Activated CD4-positive, alpha-beta T cell treated with anti-CD3 and anti-CD28 coated beads, Interleukin-2, amount 10 ng/mL, durations not matched to agents 7 days and 5 days (primary cell): ENCODE measurements at regions of chr15 and their contacts with region 1.

Region 1: GRCh38 chr15:63986751-63987341 is 59.4 kb downstream of the DAPK2 start:
- DNase-seq: no peak
- H3K4me3 Mint-ChIP-seq: no peak overlapping the region
- H3K27ac Mint-ChIP-seq: no peak overlapping the region
- H3K4me1 Mint-ChIP-seq: peaks cover 7% of the 10 kb centered on the region
- H3K27me3 Mint-ChIP-seq: no peaks in the 10 kb centered on the region

Region 2: GRCh38 chr15:63922261-63922904 is 64.5 kb before region 1 on chr15:
- CTCF ChIA-PET with region 1: no interaction called
- POLR2A ChIA-PET with region 1: no interaction called
- DNase-seq: no peak
- H3K4me3 Mint-ChIP-seq: no peak overlapping the region
- H3K27ac Mint-ChIP-seq: no peak overlapping the region
- H3K4me1 Mint-ChIP-seq: peaks cover 17% of the 10 kb centered on the region
- H3K27me3 Mint-ChIP-seq: no peaks in the 10 kb centered on the region

Region 3: DNA sequence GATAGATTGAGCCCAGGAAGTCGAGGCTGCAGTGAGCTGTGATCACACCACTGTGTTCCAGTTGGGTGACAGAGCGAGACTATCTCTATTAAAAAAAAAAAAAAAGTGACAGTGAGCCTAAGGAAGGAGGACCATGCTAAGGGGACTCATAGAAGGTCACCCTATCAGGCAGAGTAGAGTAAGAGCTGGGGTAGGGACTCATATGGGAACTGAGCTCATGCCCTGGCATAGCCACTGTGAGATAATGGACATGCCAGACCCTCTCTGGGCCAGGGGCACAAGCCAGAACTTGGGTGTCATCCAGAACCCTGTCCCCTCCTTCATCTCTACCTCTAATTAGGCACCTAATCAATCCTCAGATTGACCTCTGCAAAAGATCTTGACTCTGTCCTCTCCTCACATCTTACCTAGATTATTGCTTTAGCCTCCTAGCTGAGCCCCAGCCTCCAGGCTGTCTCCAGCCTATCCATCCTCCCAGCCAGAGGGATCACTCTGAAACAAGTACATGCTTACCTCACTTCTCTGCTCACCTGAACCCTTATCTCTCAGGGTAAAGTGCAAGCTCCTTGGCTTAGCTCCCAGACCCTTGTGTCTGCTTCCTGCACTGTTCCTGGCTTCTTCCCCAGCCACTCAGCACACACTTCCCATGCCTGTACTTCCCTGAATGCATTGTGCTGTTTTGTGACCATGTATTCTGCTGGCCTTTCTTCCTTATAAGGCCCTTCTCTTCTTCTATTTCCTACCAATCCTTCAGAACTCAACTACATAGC is 17.0 kb before region 1 on chr15:
- CTCF ChIA-PET with region 1: interaction called, 13 read pairs
- POLR2A ChIA-PET with region 1: no interaction called
- DNase-seq: no peak
- H3K4me3 Mint-ChIP-seq: no peak overlapping the region
- H3K27ac Mint-ChIP-seq: peak overlapping the region; percentile 96
- H3K4me1 Mint-ChIP-seq: peaks cover 41% of the 10 kb centered on the region
- H3K27me3 Mint-ChIP-seq: no peaks in the 10 kb centered on the region